ENCODE measurements at regions of chr17 and their contacts with region 1.

Region 1: GRCh38 chr17:1561400-1562175 is 1.0 kb downstream of the PITPNA start:
- DNase-seq: no peak
- H3K4me3 ChIP-seq: peak overlapping the region; percentile 91 to 99 (median 94)
- H3K27ac ChIP-seq: peak overlapping the region; percentile 92 to 98 (median 98)
- H3K4me1 ChIP-seq: peaks cover 28 to 62% (median 52%) of the 10 kb centered on the region in 4 donors
- H3K27me3 ChIP-seq: no peaks in the 10 kb centered on the region
- CTCF ChIP-seq: peak; percentile 18 to 45 (median 30)
- EP300 ChIP-seq: no peak
- POLR2A ChIP-seq: no peak

Region 2: DNA sequence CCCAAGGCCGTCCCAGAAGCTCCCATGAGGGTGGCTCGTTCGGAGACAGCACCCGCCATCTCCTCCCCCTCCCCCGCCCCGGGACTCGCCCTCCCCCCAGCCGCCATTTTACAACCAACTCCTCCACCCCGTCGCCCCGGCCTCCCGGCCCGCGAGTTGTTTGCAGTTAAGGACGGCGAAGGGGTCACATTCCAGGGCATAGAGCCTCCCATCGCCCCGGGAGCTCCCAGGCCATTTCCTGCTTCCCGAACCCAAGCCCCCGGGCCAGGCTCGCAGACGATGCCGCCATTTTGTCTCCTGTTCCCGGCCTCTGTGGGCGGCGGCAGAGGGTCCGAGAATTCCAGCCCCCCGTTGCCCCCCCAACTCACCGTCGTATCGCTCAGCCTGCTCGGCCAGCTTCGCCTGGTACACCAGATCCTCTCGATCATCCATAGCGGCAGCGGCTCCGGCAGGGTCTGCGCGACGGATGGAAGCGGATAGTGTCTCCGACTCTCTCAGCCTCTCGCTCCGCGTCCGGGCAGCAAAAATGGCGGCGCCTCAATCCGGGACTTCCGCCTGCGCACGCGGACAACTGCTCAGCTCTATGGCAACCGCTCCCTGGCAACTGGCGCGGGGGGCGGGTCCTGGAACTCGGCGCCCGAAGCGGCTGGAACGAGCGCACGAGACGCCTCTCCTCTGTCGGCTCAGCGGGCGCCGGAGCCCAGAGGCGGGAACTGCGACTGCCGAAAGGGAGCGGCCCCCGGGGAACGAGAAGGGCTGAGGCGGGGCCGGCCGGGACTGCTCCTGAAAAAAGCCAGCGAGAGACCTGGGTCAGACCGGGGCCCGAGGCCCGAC is 161.7 kb before region 1 on chr17 and contains the start of gene YWHAE:
- intact Hi-C with region 1: no loop called
- DNase-seq: peak; percentile 99
- H3K4me3 ChIP-seq: peak within 1 kb of the TSS; percentile 72 to 88 (median 84)
- H3K27ac ChIP-seq: peak within 1 kb of the TSS; percentile 95 to 98 (median 96)
- H3K4me1 ChIP-seq: peaks cover 39 to 49% (median 45%) of the 10 kb centered on the region in 4 donors
- H3K27me3 ChIP-seq: no peaks in the 10 kb centered on the region
- CTCF ChIP-seq: no peak
- EP300 ChIP-seq: no peak
- POLR2A ChIP-seq: peak; percentile 92
- total RNA-seq, gene YWHAE: 329 to 408 (median 364) TPM

Region 3: DNA sequence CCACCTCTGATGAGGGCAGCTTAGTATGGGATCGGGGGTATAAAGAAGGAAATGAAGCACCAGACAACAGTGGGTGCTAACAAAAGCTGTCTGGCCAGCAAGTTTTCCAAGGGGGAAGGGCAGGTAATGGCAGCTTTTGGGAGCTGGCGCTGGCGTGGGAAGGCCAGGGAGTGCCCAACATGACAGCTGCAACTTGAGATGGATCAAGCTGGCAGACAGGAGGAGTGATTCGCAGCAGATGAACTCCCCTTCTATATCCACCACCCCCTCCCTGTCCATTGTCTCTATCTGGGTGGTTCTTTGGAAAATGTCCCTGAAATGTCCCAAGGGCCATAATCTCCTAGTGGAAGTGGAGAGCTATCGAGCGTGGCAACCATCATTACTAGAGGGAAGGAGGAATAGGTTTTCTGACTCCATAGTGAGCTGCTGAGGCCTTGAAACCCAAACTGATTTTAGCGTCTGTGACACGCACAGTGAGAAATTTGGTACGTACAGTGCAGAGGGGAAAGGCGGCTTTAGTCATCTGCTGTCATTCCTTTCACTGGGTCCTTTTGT is 40.4 kb before region 1 on chr17:
- intact Hi-C with region 1: no loop called
- DNase-seq: no peak
- H3K4me3 ChIP-seq: no peak overlapping the region
- H3K27ac ChIP-seq: no peak overlapping the region
- H3K4me1 ChIP-seq: peaks cover 7 to 11% (median 9%) of the 10 kb centered on the region in 4 donors
- H3K27me3 ChIP-seq: no peaks in the 10 kb centered on the region
- CTCF ChIP-seq: no peak
- EP300 ChIP-seq: no peak
- POLR2A ChIP-seq: no peak

Region 4: GRCh38 chr17:1716076-1716995 is 154.7 kb after region 1 on chr17:
- intact Hi-C with region 1: loop called (anchors 10 kb)
- DNase-seq: peak; percentile 100
- H3K4me3 ChIP-seq: peak overlapping the region; percentile 91 to 100 (median 96)
- H3K27ac ChIP-seq: peak overlapping the region; percentile 99 to 100 (median 100)
- H3K4me1 ChIP-seq: peaks cover 55 to 69% (median 60%) of the 10 kb centered on the region in 4 donors
- H3K27me3 ChIP-seq: no peaks in the 10 kb centered on the region
- CTCF ChIP-seq: peak in 1 of 3 experiments; percentile 27
- EP300 ChIP-seq: peak; percentile 23
- POLR2A ChIP-seq: peak; percentile 100

Measured in esophagus muscularis mucosa (tissue), 4 donors.